Lower lobe of right lung (tissue), 2 donors: ENCODE measurements at regions of chr1 and their contacts with region 1.

Region 1: GRCh38 chr1:182084487-182085316 is 23.2 kb upstream of the ZNF648 start:
- DNase-seq: peak; percentile 89
- ATAC-seq: peak; percentile 93
- H3K4me3 ChIP-seq: no peak overlapping the region
- H3K27ac ChIP-seq: peak overlapping the region; percentile 62
- H3K4me1 ChIP-seq: peaks cover 9% of the 10 kb centered on the region
- H3K27me3 ChIP-seq: no peaks in the 10 kb centered on the region
- CTCF ChIP-seq: peak; percentile 87

Region 2: GRCh38 chr1:182391362-182392044 is 306.8 kb after region 1 on chr1 and contains the start of gene GLUL:
- intact Hi-C with region 1: loop called (anchors 10 kb)
- DNase-seq: peak; percentile 97
- ATAC-seq: peak; percentile 95 to 96
- H3K4me3 ChIP-seq: peak within 1 kb of the TSS; percentile 95
- H3K27ac ChIP-seq: peak within 1 kb of the TSS; percentile 99
- H3K4me1 ChIP-seq: peaks cover 45% of the 10 kb centered on the region
- H3K27me3 ChIP-seq: no peaks in the 10 kb centered on the region
- CTCF ChIP-seq: peak; percentile 5
- total RNA-seq, gene GLUL: 1,362 TPM